Activated B cell treated with CpG ODN at 0.5 μM for 24 hours (primary cell): ENCODE measurements at regions of chr15 and their contacts with region 1.

Region 1: DNA sequence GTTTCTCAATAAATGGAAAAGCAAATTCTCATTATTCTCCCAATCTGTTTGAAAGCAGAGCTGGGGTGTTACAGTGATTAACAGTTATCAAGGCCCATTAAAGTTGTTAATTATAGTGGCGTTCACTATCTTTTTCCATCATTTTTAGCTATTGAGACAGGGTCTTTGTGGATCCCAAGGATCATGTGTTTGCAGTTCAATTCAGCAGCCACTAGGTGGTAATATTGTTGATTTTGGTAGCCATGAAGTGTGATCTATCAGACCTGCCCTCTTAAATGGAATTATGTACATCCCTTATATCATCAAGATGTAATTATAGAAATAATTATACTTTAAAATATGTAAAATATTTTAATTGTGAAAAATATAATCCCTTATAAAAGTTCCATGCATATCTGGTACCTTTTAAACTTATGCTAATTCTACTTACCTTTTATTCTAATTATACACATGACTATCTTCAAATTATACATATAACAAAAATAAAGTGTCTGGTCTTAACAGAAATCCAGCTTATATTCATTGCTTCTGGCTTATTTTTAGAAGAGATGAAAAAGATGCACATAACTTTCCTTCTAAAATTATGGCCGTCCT is 126.4 kb downstream of the GREM1 start:
- DNase-seq: no peak
- ATAC-seq: no peak
- H3K4me3 Mint-ChIP-seq: no peak overlapping the region
- H3K27ac Mint-ChIP-seq: no peak overlapping the region
- H3K4me1 Mint-ChIP-seq: peaks cover 9% of the 10 kb centered on the region
- H3K27me3 Mint-ChIP-seq: peaks cover 13% of the 10 kb centered on the region
- CTCF ChIP-seq: peak; percentile 54

Region 2: GRCh38 chr15:32664796-32665195 is 179.4 kb before region 1 on chr15:
- CTCF ChIA-PET with region 1: interaction called, 23 read pairs
- POLR2A ChIA-PET with region 1: no interaction called
- intact Hi-C with region 1: loop called (anchors 2 kb)
- DNase-seq: no peak
- ATAC-seq: no peak
- H3K4me3 Mint-ChIP-seq: no peak overlapping the region
- H3K27ac Mint-ChIP-seq: no peak overlapping the region
- H3K4me1 Mint-ChIP-seq: no peaks in the 10 kb centered on the region
- H3K27me3 Mint-ChIP-seq: no peaks in the 10 kb centered on the region
- CTCF ChIP-seq: no peak

Region 3: GRCh38 chr15:32818758-32819447 is 25.3 kb before region 1 on chr15:
- CTCF ChIA-PET with region 1: no interaction called
- POLR2A ChIA-PET with region 1: no interaction called
- intact Hi-C with region 1: no loop called
- DNase-seq: no peak
- ATAC-seq: no peak
- H3K4me3 Mint-ChIP-seq: no peak overlapping the region
- H3K27ac Mint-ChIP-seq: no peak overlapping the region
- H3K4me1 Mint-ChIP-seq: peaks cover 2% of the 10 kb centered on the region
- H3K27me3 Mint-ChIP-seq: peaks cover 14% of the 10 kb centered on the region
- CTCF ChIP-seq: no peak

Region 4: DNA sequence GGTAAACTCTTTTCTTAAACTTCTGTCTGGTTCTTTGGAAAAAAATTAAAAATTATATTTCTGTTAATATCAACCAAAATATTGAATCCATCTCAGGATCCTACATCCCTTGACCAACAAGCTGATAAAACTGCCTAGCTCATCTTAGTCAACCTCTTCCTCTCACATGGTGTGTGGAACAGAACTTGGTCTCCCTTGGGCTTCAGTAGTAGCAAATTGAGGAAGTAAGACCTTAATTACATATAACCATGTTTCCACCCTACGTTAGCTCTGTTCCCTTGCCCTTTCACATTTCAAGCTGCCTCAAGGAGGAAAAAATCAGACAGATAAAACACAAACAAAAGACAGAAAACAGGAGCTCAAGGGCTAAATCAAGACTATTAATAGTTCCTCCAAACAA is 10.1 kb before region 1 on chr15:
- CTCF ChIA-PET with region 1: interaction called, 39 read pairs
- POLR2A ChIA-PET with region 1: interaction called, 3 read pairs
- intact Hi-C with region 1: loop called (anchors 1 kb)
- DNase-seq: no peak
- ATAC-seq: peak; percentile 99
- H3K4me3 Mint-ChIP-seq: peak overlapping the region; percentile 3
- H3K27ac Mint-ChIP-seq: no peak overlapping the region
- H3K4me1 Mint-ChIP-seq: peaks cover 26% of the 10 kb centered on the region
- H3K27me3 Mint-ChIP-seq: peaks cover 20% of the 10 kb centered on the region
- CTCF ChIP-seq: no peak

Region 5: GRCh38 chr15:32870240-32871033 is 26.2 kb after region 1 on chr15:
- CTCF ChIA-PET with region 1: interaction called, 4 read pairs
- POLR2A ChIA-PET with region 1: interaction called, 3 read pairs
- intact Hi-C with region 1: loop called (anchors 1 kb)
- DNase-seq: peak; percentile 57
- ATAC-seq: peak; percentile 86
- H3K4me3 Mint-ChIP-seq: no peak overlapping the region
- H3K27ac Mint-ChIP-seq: peak overlapping the region; percentile 48
- H3K4me1 Mint-ChIP-seq: peaks cover 16% of the 10 kb centered on the region
- H3K27me3 Mint-ChIP-seq: peaks cover 2% of the 10 kb centered on the region
- CTCF ChIP-seq: no peak

Region 6: DNA sequence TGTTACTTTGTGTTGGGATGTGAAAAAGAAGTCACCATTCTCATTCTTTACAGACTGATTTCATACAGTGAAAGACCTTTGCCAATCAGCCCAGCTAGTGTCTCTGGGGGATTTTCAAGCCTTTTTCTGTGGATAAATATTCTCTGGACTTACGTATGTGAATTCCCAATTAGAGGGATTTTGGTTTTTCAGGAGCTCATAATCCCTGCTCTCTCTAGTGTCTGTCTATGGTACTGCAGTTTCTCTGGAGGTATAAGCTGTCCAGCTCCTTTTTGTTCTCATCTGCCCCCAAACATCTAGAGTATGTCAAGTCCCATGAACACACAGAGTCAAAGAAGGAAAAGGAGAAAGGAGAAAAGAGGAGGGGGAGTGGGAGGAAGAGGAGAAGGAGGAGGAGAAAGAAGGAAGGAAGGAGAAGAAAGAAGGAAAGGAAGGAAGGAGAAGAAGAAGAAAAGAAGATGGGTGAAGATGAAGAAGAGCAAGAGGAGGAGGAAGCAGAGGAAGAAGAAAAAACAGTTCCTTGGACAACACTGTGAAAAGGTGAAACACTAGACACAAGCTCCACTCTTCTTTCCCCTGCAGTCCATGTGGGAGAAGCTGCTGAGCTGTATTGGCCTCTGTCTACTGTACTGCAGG is 92.2 kb after region 1 on chr15:
- CTCF ChIA-PET with region 1: interaction called, 84 read pairs
- POLR2A ChIA-PET with region 1: no interaction called
- intact Hi-C with region 1: loop called (anchors 5 kb)
- DNase-seq: no peak
- ATAC-seq: no peak
- H3K4me3 Mint-ChIP-seq: no peak overlapping the region
- H3K27ac Mint-ChIP-seq: no peak overlapping the region
- H3K4me1 Mint-ChIP-seq: peaks cover 2% of the 10 kb centered on the region
- H3K27me3 Mint-ChIP-seq: peaks cover 22% of the 10 kb centered on the region
- CTCF ChIP-seq: no peak

Region 7: GRCh38 chr15:32956006-32956405 is 111.8 kb after region 1 on chr15:
- CTCF ChIA-PET with region 1: interaction called, 48 read pairs
- POLR2A ChIA-PET with region 1: no interaction called
- intact Hi-C with region 1: loop called (anchors 1 kb)
- DNase-seq: no peak
- ATAC-seq: no peak
- H3K4me3 Mint-ChIP-seq: no peak overlapping the region
- H3K27ac Mint-ChIP-seq: no peak overlapping the region
- H3K4me1 Mint-ChIP-seq: no peaks in the 10 kb centered on the region
- H3K27me3 Mint-ChIP-seq: peaks cover 16% of the 10 kb centered on the region
- CTCF ChIP-seq: no peak

Region 8: GRCh38 chr15:32994810-32995424 is 150.7 kb after region 1 on chr15:
- CTCF ChIA-PET with region 1: interaction called, 51 read pairs
- POLR2A ChIA-PET with region 1: no interaction called
- intact Hi-C with region 1: loop called (anchors 1 kb)
- DNase-seq: no peak
- ATAC-seq: no peak
- H3K4me3 Mint-ChIP-seq: no peak overlapping the region
- H3K27ac Mint-ChIP-seq: no peak overlapping the region
- H3K4me1 Mint-ChIP-seq: no peaks in the 10 kb centered on the region
- H3K27me3 Mint-ChIP-seq: peaks cover 18% of the 10 kb centered on the region
- CTCF ChIP-seq: peak; percentile 27